GM12878 (cell line): ENCODE measurements at regions of chr6 and their contacts with region 1.

Region 1: GRCh38 chr6:13375360-13375878 is 47.1 kb upstream of the TBC1D7 start:
- DNase-seq: peak; percentile 95
- ATAC-seq: peak; percentile 88
- H3K4me3 ChIP-seq: no peak overlapping the region
- H3K27ac ChIP-seq: peak overlapping the region; percentile 98
- H3K4me1 ChIP-seq: peaks cover 65% of the 10 kb centered on the region
- H3K27me3 ChIP-seq: no peaks in the 10 kb centered on the region
- CTCF ChIP-seq: no peak
- EP300 ChIP-seq: peak; percentile 72 to 82; a peak in 3 of 4 replicates
- POLR2A ChIP-seq: peak; percentile 38; the same call in 1 of the 2 replicates
- RAD21 ChIP-seq: no peak

Region 2: DNA sequence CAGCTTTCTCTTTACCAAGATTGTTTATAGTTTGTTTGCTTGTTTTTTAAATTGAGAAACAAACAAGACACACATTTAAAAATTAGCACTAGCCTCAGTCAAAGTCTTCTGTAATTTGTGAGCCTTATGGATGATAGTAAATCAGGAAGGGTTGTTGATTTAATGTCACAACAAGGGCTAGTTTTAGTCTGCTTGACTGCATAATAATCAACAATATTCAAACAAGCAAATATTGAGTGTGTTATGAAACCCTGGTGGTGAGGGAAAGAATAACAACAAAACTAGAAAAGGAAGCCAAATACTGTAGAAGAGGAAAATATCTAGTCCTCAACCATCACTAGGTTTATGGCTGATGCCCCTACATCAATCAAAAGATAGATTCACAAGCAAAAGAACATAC is 275.6 kb before region 1 on chr6:
- CTCF ChIA-PET with region 1: no interaction called
- POLR2A ChIA-PET with region 1: no interaction called
- RAD21 ChIA-PET with region 1: no interaction called
- SMC1A ChIA-PET with region 1: no interaction called
- in situ Hi-C with region 1: no loop called
- intact Hi-C with region 1: no loop called
- DNase-seq: no peak
- ATAC-seq: no peak
- H3K4me3 ChIP-seq: no peak overlapping the region
- H3K27ac ChIP-seq: no peak overlapping the region
- H3K4me1 ChIP-seq: no peaks in the 10 kb centered on the region
- H3K27me3 ChIP-seq: no peaks in the 10 kb centered on the region; a peak in 1 of 4 replicates
- CTCF ChIP-seq: 0 out of 6 replicates have a peak, but pooled peaks of 2 of the 3 experiments have one; percentile 8 to 21
- EP300 ChIP-seq: no peak
- POLR2A ChIP-seq: no peak
- RAD21 ChIP-seq: no peak

Region 3: DNA sequence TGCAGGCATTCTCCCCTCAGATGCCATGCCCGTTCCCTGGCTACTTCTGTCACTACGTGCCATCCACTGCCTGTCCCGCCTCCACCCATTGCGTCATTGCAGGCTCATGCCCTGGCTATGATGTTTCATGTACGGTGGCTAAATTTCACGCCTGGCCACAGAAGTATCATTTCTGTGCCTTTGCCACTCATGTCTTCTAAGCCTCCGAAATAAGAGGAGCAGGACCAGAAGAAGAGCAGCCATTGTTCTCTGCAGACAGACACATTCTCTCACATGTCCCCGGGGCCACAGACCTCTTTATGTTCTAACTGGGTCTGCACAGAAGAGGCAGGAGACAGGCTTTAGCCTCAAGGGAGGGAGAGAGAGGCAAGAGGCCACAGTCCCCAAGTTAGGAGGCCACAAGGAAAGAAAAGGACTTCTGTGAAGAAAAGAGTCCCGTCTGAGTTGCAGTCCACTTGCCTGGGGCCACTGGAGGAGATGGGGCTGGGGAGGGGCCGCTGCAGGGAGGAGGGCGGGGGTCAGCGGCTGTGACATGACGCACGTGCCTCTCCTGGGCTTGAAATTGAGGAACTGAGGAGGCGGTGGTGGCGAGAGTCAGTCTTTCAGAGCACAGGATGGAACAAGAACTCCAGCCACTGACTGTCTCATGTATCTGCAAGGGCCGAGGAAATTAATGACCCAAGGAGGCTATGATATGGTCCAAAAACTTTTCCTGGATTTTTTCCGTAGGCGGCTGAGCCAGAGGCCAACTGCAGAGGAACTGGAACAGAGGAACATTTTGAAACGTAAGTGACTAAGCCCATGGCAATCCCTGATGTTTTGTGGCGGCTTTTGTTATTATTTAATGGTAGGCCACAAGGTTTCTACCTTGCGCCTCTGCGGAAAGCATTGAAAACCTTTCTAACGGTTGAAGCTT is 103.0 kb before region 1 on chr6:
- CTCF ChIA-PET with region 1: interaction called, 3 read pairs
- POLR2A ChIA-PET with region 1: interaction called, 3 read pairs
- RAD21 ChIA-PET with region 1: interaction called, 10 read pairs
- SMC1A ChIA-PET with region 1: no interaction called
- in situ Hi-C with region 1: no loop called
- intact Hi-C with region 1: no loop called
- DNase-seq: peak; percentile 67
- ATAC-seq: peak; percentile 72
- H3K4me3 ChIP-seq: peak overlapping the region; percentile 82
- H3K27ac ChIP-seq: peak overlapping the region; percentile 92
- H3K4me1 ChIP-seq: peaks cover 20% of the 10 kb centered on the region
- H3K27me3 ChIP-seq: no peaks in the 10 kb centered on the region; a peak in 1 of 4 replicates
- CTCF ChIP-seq: peak in 2 of 3 experiments; percentile 20 to 37; a peak in 3 of 6 replicates
- EP300 ChIP-seq: peak; percentile 53 to 72; a peak in 1 of 4 replicates
- POLR2A ChIP-seq: peak; percentile 86
- RAD21 ChIP-seq: peak; percentile 44; the same call in 1 of the 2 replicates

Region 4: GRCh38 chr6:13360671-13361550 is 14.5 kb before region 1 on chr6:
- CTCF ChIA-PET with region 1: interaction called, 41 read pairs
- POLR2A ChIA-PET with region 1: interaction called, 45 read pairs
- RAD21 ChIA-PET with region 1: interaction called, 67 read pairs
- SMC1A ChIA-PET with region 1: interaction called, 178 read pairs
- in situ Hi-C with region 1: no loop called
- intact Hi-C with region 1: loop called (anchors 1 kb)
- DNase-seq: no peak
- ATAC-seq: no peak
- H3K4me3 ChIP-seq: no peak overlapping the region
- H3K27ac ChIP-seq: peak overlapping the region; percentile 23; the same call in 1 of the 2 replicates
- H3K4me1 ChIP-seq: peaks cover 18% of the 10 kb centered on the region
- H3K27me3 ChIP-seq: no peaks in the 10 kb centered on the region
- CTCF ChIP-seq: no peak
- EP300 ChIP-seq: no peak
- POLR2A ChIP-seq: no peak
- RAD21 ChIP-seq: no peak

Region 5: DNA sequence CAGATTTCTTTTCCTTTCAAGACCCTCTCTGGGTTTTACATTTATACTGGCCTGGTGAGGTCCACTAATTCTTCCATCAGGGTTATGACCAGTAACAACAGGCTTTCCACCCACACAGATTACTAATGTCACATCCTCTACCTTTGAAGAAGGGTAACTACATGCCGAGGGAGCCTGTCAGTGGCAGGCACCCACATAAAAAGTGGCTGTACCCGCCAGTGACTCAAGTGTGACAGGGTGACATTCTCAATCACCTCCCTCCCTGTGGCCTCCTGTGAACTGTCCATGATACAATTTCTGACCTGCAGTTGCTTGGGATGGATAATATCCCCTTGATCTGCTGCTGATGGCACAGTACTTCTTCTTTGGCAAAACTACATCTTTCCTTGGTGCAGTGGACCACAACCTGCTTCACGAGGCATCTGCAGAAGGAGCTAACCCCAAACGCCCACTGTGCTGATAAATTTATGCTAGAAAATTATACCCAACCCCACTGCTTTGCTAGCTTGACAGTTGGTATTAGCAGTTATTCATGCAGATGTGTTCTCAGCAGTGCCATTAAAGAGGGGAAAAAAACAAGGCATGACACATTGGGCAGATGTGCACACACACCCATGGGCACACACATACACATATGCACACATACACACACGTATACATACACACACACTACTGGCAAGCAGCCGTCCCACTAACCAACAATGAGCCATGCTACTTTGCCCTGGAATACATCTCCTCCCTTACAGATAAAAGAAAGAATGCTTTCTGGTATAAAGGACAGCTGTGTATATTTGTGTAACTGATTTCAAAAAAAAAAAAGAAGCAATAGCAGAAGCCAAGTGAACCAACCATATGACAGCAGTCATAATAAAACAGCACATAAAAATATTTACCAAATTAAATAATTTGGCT is 91.1 kb after region 1 on chr6:
- CTCF ChIA-PET with region 1: no interaction called
- POLR2A ChIA-PET with region 1: interaction called, 3 read pairs
- RAD21 ChIA-PET with region 1: interaction called, 5 read pairs
- SMC1A ChIA-PET with region 1: interaction called, 3 read pairs
- in situ Hi-C with region 1: no loop called
- intact Hi-C with region 1: loop called (anchors 5 kb)
- DNase-seq: no peak
- ATAC-seq: peak; percentile 73
- H3K4me3 ChIP-seq: no peak overlapping the region
- H3K27ac ChIP-seq: peak overlapping the region; percentile 41; the same call in 1 of the 2 replicates
- H3K4me1 ChIP-seq: peaks cover 46% of the 10 kb centered on the region
- H3K27me3 ChIP-seq: no peaks in the 10 kb centered on the region
- CTCF ChIP-seq: no peak
- EP300 ChIP-seq: no peak
- POLR2A ChIP-seq: no peak
- RAD21 ChIP-seq: no peak

Region 6: DNA sequence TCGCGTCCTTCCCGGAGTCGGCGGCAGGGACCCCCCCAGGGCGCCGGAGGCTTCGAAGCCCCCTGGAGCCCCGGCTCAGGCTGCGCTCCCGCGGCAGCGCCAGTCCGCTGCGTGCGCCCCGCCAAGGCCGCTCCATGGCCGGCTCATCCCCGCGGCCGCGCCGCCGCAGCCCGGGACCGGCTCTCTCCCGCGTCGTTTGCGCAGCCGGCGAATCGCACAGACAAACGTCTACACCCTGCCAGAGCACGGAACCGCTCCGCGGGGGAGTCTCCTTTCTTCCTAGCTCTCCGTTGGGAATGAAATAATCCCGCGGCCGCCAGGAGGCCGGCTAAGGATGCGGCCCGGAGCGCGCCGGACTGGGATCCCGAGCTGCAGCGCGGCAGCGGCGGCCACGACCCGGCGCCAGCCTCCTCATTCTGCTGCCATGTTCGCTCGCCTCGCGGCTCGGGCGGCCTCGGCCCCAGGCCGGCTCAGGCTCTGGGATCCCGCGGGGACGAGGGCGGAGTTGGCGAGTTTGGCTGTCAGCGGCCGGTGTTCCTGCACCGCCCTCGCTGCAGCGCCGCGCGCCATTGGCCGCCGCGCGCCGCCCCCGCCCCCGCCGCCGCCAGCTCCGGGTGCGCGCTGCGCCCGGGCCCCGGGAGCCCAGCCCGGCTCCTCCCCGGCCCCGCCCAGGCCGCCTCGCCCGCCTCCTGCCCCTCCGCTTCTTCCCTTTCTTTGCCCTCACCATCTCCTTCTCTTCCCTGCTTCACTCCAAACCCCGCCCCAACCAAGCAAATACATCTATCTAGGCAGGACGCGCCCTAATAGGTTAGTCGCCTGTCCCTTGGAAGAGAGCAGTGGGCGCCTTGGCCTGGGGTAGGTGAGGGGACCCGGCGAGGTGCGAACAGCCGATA is 111.9 kb after region 1 on chr6 and contains the start of gene GFOD1:
- CTCF ChIA-PET with region 1: interaction called, 3 read pairs
- POLR2A ChIA-PET with region 1: interaction called, 11 read pairs
- RAD21 ChIA-PET with region 1: interaction called, 18 read pairs
- SMC1A ChIA-PET with region 1: interaction called, 19 read pairs
- in situ Hi-C with region 1: no loop called
- intact Hi-C with region 1: no loop called
- DNase-seq: no peak
- ATAC-seq: peak; percentile 80
- H3K4me3 ChIP-seq: peak within 1 kb of the TSS; percentile 100
- H3K27ac ChIP-seq: peak within 1 kb of the TSS; percentile 69
- H3K4me1 ChIP-seq: peaks cover 15% of the 10 kb centered on the region
- H3K27me3 ChIP-seq: no peaks in the 10 kb centered on the region
- CTCF ChIP-seq: no peak
- EP300 ChIP-seq: no peak
- POLR2A ChIP-seq: peak; percentile 86
- RAD21 ChIP-seq: no peak
- polyA plus RNA-seq, gene GFOD1: 6.5 to 7.9 TPM